ENCODE measurements at regions of chr15 and their contacts with region 1.

Region 1: GRCh38 chr15:92714477-92715401 is 59.2 kb upstream of the FAM174B start:
- DNase-seq: peak; percentile 94
- H3K4me3 ChIP-seq: peak overlapping the region; percentile 63 to 75 (median 65)
- H3K27ac ChIP-seq: peak overlapping the region; percentile 86 to 93 (median 89)
- H3K4me1 ChIP-seq: peaks cover 4 to 19% (median 15%) of the 10 kb centered on the region in 4 donors
- H3K27me3 ChIP-seq: no peaks in the 10 kb centered on the region
- CTCF ChIP-seq: peak; percentile 82 to 92 (median 89)
- EP300 ChIP-seq: no peak
- POLR2A ChIP-seq: no peak

Region 2: GRCh38 chr15:92097474-92098178 is 617.1 kb before region 1 on chr15:
- intact Hi-C with region 1: loop called (anchors 10 kb)
- DNase-seq: no peak
- H3K4me3 ChIP-seq: no peak overlapping the region
- H3K27ac ChIP-seq: no peak overlapping the region
- H3K4me1 ChIP-seq: peaks cover 3 to 11% (median 9%) of the 10 kb centered on the region in 4 donors
- H3K27me3 ChIP-seq: no peaks in the 10 kb centered on the region
- CTCF ChIP-seq: peak; percentile 64 to 70 (median 64)
- EP300 ChIP-seq: no peak
- POLR2A ChIP-seq: no peak

Region 3: DNA sequence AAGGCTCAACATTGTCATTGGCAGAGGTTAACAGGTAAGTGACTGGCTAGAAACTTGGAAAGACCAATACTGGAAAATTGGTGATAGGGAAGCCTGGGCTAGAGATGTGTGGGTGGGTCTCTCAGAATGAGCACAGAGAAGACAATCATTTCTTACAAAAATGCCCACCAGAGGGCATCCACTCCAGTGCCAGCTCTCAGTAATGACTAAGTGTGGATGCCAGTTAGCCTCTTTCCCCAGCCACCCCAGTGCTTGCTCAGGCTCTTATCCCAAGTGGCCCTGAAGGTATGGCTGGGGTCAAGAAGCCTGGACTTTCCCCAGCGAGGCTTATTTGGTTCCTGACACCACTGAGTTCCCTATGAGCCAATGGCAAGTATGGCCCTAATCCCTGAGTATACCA is 437.0 kb before region 1 on chr15:
- intact Hi-C with region 1: loop called (anchors 10 kb)
- DNase-seq: peak; percentile 87
- H3K4me3 ChIP-seq: no peak overlapping the region
- H3K27ac ChIP-seq: no peak overlapping the region
- H3K4me1 ChIP-seq: no peaks in the 10 kb centered on the region
- H3K27me3 ChIP-seq: peaks cover 0 to 15% (median 0%) of the 10 kb centered on the region in 4 donors
- CTCF ChIP-seq: peak; percentile 6 to 26 (median 13)
- EP300 ChIP-seq: no peak
- POLR2A ChIP-seq: no peak

Region 4: GRCh38 chr15:92494806-92495336 is 219.9 kb before region 1 on chr15:
- intact Hi-C with region 1: no loop called
- DNase-seq: no peak
- H3K4me3 ChIP-seq: no peak overlapping the region
- H3K27ac ChIP-seq: no peak overlapping the region
- H3K4me1 ChIP-seq: no peaks in the 10 kb centered on the region
- H3K27me3 ChIP-seq: peaks cover 0 to 31% (median 3%) of the 10 kb centered on the region in 4 donors
- CTCF ChIP-seq: no peak
- EP300 ChIP-seq: no peak
- POLR2A ChIP-seq: no peak

Region 5: GRCh38 chr15:92521624-92522008 is 193.1 kb before region 1 on chr15:
- intact Hi-C with region 1: loop called (anchors 2 kb)
- DNase-seq: no peak
- H3K4me3 ChIP-seq: no peak overlapping the region
- H3K27ac ChIP-seq: peak overlapping the region in 2 of 4 donors; percentile 30 to 39
- H3K4me1 ChIP-seq: peaks cover 3 to 6% (median 4%) of the 10 kb centered on the region in 4 donors
- H3K27me3 ChIP-seq: no peaks in the 10 kb centered on the region
- CTCF ChIP-seq: peak; percentile 82 to 95 (median 87)
- EP300 ChIP-seq: no peak
- POLR2A ChIP-seq: no peak

Region 6: DNA sequence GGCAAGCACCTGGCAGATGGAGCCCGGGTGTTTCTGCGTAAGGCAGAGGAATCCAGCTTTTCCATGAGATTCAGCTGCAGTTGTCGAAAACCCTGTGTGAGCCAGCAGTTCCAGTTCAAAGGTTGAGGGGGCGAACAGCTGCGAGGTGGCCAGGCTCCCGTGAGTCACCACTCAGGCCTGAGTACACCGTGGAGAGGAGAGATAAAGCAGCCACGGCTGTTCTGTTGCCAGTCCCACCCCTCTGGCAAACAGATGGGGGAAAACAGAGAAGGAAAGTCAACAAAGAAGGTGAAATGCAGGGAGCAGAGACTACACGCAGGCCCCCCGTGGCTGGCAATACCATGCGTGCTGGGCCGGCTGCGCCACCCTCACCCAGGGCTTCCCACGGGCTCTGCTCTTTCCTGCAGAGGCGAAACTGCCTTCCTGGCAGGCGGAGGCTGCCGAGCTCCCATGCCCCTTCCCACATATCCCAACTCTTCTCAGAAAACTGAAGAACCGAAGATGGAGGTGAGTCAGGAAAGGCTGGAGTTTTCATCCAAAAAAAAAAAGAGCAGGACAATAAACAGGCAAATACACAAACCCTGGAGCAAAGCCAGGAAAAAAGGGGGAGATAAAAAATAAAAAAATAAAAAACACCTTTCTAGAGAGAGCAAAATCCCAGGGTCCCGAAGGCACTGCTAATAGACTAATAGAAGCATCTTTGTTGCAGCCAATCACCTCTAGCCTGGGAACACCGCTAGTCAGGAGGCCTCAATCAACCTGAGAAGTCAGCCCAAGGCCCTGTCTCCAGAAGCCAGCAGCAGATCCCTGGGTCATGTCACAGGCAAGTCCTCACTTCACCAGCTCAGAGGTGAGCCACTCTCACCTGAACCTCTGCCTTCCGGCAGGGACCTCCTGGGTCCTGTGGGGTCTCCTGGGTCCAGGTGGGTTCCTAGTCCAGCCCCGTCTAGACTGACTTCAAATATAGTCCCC is 96.9 kb before region 1 on chr15:
- intact Hi-C with region 1: loop called (anchors 10 kb)
- DNase-seq: no peak
- H3K4me3 ChIP-seq: no peak overlapping the region
- H3K27ac ChIP-seq: peak overlapping the region; percentile 57 to 72 (median 69)
- H3K4me1 ChIP-seq: peaks cover 35 to 42% (median 41%) of the 10 kb centered on the region in 4 donors
- H3K27me3 ChIP-seq: no peaks in the 10 kb centered on the region
- CTCF ChIP-seq: no peak
- EP300 ChIP-seq: no peak
- POLR2A ChIP-seq: no peak

Region 7: GRCh38 chr15:93121973-93122910 is 407.5 kb after region 1 on chr15:
- intact Hi-C with region 1: no loop called
- DNase-seq: no peak
- H3K4me3 ChIP-seq: no peak overlapping the region
- H3K27ac ChIP-seq: no peak overlapping the region
- H3K4me1 ChIP-seq: peaks cover 0 to 6% (median 0%) of the 10 kb centered on the region in 4 donors
- H3K27me3 ChIP-seq: no peaks in the 10 kb centered on the region
- CTCF ChIP-seq: no peak
- EP300 ChIP-seq: no peak
- POLR2A ChIP-seq: no peak

Measured in esophagus muscularis mucosa (tissue), 4 donors.